ENCODE measurements at regions of chr6 and their contacts with region 1.

Region 1: DNA sequence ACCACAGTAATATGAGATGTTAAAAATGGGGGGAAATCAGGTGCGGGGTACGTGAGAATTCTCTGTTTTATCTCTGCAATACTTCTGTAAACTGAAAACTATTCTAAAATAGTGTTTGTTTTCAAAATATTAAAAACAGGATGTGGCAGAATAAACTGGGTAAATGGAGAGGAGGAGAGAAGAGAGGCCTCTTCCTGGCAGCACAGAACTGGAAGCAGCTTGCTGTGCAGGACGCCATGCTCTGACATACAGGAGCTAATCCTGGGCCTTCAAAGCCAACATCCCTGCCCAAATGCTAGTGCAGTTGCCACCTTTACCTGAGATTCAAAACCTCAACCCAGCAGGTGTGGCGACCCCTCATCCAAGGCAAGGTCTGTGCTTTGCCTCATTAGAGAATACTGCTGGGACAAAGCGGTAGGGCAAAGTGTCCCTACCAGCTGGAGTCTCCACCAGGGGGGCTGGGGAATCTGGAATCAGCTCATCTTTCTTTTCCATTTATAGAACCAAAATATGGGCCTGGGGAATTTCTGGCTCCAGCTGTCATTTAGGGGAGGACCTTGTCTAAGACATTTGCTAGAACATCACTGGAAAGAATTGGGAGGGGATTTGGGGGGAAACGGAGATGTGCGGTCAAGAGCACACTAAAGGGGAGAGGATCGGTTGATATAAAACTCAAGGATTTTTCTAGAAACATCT is 67.3 kb downstream of the SCML4 start:
- DNase-seq: peak in 2 of 14 experiments; percentile 26 to 54
- ATAC-seq: peak; percentile 43
- H3K4me3 ChIP-seq: no peak overlapping the region
- H3K4me3 Mint-ChIP-seq: peak overlapping the region; percentile 31
- H3K27ac ChIP-seq: peak overlapping the region in 1 of 2 donors; percentile 55
- H3K27ac Mint-ChIP-seq: peak overlapping the region; percentile 69
- H3K4me1 ChIP-seq: peaks cover 30% of the 10 kb centered on the region
- H3K4me1 Mint-ChIP-seq: peaks cover 79% of the 10 kb centered on the region
- H3K27me3 ChIP-seq: no peaks in the 10 kb centered on the region
- H3K27me3 Mint-ChIP-seq: no peaks in the 10 kb centered on the region
- CTCF ChIP-seq: no peak

Region 2: DNA sequence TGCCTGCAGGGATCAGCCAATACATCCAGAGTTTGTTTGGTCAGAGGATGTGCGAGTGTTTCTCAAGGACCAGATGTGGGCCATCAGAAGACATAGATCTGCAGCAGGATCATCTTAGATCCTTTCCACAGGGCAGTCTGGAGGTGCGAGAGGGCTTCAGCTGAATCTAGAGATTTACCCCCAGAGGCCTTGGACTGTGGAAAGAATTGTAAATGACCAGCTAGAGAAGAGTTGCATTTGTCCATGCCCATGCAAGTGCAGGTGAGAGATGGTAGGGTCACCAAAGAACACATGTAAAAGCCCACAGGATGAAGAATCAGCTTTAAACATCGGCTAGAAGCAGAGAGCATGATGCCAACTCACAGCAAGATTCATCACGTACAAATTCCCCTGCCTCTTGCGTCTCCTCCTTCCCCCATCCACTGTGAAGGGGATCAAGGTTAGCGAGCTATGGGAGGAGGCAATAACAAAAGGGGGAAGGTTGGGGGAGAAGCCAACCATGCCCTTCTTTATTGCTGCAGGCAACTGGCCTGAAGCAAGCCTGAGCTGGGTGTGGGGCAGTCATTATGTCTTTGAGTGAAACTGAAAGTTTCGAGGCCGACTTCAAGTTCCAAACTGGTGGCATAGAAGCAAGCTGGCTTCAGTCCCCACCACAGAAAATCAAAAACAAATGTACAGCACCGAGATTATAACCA is 16.2 kb before region 1 on chr6:
- CTCF ChIA-PET with region 1: interaction called, 3 read pairs
- POLR2A ChIA-PET with region 1: interaction called, 24 read pairs
- intact Hi-C with region 1: loop called (anchors 2 kb)
- DNase-seq: peak in 4 of 14 experiments; percentile 49 to 56 (median 54)
- ATAC-seq: peak; percentile 14
- H3K4me3 ChIP-seq: peak overlapping the region; percentile 46
- H3K4me3 Mint-ChIP-seq: peak overlapping the region; percentile 76
- H3K27ac ChIP-seq: peak overlapping the region; percentile 69 to 86
- H3K27ac Mint-ChIP-seq: peak overlapping the region; percentile 93
- H3K4me1 ChIP-seq: peaks cover 59% of the 10 kb centered on the region
- H3K4me1 Mint-ChIP-seq: peaks cover 87% of the 10 kb centered on the region
- H3K27me3 ChIP-seq: no peaks in the 10 kb centered on the region
- H3K27me3 Mint-ChIP-seq: no peaks in the 10 kb centered on the region
- CTCF ChIP-seq: no peak